ENCODE measurements at regions of chr5 and their contacts with region 1.

Region 1: DNA sequence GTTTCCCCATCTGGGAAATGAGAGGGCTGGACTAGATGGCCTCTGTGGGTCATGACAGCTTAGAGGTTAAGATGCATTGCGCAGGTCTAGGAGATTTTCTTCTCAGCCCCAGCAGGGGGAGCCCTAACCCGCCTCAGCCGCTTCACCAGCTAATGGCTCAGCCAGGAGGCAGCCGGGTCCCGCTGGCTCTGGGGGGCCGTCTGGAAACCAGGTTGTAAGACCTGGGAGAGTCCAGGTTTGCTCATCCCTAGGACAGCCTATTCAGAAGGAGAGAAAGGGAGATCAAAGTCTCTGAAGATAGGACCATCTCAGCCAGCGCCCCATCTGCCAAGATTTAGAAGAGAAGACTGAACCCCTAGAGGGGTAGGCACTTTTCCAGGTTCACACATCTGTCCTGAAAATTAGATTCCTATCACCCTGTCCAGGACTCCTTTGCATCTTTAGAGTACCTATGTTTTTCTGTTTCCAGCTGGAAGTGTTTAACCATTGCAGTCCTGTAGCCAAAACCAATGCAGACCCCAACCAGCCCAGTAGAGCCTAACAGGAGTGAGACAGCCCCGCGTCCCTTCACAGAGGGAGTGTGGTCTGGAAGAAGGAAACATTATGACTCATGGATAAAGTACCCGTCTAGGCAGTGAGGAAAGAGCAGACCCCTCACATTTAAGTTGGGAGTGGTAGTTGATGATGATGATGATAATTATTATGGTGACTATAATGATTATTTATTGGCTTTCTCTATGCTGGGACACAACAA is 27.5 kb downstream of the SPARC start:
- DNase-seq: peak; percentile 87

Region 2: GRCh38 chr5:151719228-151720000 is 60.2 kb after region 1 on chr5:
- CTCF ChIA-PET with region 1: interaction called, 22 read pairs
- POLR2A ChIA-PET with region 1: no interaction called
- DNase-seq: no peak

Region 3: GRCh38 chr5:151740336-151740942 is 81.3 kb after region 1 on chr5:
- CTCF ChIA-PET with region 1: interaction called, 61 read pairs
- POLR2A ChIA-PET with region 1: interaction called, 6 read pairs
- DNase-seq: peak; percentile 74

Measured in HEK293T (cell line).